B cell (primary cell): ENCODE measurements at regions of chr6 and their contacts with region 1.

Region 1: GRCh38 chr6:45942953-45943352 is 72.7 kb downstream of the CLIC5 start:
- DNase-seq: no peak
- ATAC-seq: no peak
- H3K4me3 ChIP-seq: no peak overlapping the region
- H3K4me3 Mint-ChIP-seq: no peak overlapping the region
- H3K27ac ChIP-seq: no peak overlapping the region
- H3K27ac Mint-ChIP-seq: no peak overlapping the region
- H3K4me1 ChIP-seq: no peaks in the 10 kb centered on the region
- H3K4me1 Mint-ChIP-seq: no peaks in the 10 kb centered on the region
- H3K27me3 ChIP-seq: no peaks in the 10 kb centered on the region
- H3K27me3 Mint-ChIP-seq: no peaks in the 10 kb centered on the region
- CTCF ChIP-seq: no peak

Region 2: DNA sequence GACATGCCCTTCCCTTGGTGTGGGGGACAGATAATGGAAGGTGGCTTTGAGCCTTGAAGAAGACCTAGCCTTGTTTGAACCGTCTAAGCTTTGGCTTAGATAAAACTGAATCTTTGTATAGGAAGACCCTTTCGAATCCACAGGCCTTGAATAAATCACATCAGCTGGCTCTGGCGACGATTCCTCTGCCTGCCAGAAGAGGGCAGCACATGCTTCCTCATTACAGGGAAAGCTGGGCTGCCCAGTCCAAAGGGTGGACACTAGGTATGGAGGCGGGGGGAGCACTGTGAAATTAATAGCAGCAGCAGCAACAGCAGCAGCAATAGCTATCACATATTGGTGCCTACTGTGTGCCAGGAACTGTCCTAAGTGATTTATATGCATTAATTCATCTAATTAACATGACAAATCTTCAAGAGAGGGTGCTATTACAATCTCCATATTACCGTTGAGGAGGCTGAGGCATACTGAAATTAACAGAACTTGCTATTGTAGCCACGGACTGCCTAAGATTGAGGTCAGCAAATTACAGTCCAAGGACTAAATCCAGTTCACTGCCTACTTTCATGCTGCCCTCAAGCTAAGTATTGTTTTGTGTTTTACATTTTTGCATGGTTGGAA is 12.4 kb before region 1 on chr6:
- CTCF ChIA-PET with region 1: interaction called, 12 read pairs
- POLR2A ChIA-PET with region 1: no interaction called
- intact Hi-C with region 1: no loop called
- DNase-seq: peak; percentile 63
- ATAC-seq: no peak
- H3K4me3 ChIP-seq: no peak overlapping the region
- H3K4me3 Mint-ChIP-seq: no peak overlapping the region
- H3K27ac ChIP-seq: no peak overlapping the region
- H3K27ac Mint-ChIP-seq: no peak overlapping the region
- H3K4me1 ChIP-seq: no peaks in the 10 kb centered on the region
- H3K4me1 Mint-ChIP-seq: no peaks in the 10 kb centered on the region
- H3K27me3 ChIP-seq: no peaks in the 10 kb centered on the region
- H3K27me3 Mint-ChIP-seq: peaks cover 4% of the 10 kb centered on the region
- CTCF ChIP-seq: peak; percentile 99

Region 3: DNA sequence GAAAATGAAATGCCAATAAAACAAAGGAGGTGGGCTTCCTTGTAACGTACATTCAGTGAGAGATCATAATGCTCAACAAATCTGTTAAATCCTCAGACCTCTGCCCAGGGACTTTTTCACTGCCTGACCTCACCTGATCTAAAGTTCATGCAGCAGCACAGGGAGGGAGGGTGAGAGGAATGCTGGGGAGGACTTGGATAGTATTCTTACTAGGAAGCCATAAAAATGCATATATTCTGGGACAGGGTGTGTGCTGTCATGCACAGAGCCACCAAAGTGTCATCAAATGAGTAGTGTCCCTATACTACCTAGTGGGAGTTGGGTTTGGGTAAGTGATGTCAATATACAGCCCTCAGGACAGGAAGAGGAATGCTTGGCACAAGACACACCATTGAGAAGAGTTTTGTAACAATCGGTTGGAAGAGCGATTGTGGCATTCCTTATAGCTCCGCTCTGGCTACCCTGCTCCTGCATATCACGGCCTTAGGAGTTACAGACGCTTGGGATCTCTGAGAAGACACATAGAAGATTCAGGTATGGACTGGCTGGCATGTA is 40.2 kb after region 1 on chr6:
- CTCF ChIA-PET with region 1: no interaction called
- POLR2A ChIA-PET with region 1: no interaction called
- intact Hi-C with region 1: no loop called
- DNase-seq: no peak
- ATAC-seq: no peak
- H3K4me3 ChIP-seq: no peak overlapping the region
- H3K4me3 Mint-ChIP-seq: no peak overlapping the region
- H3K27ac ChIP-seq: no peak overlapping the region
- H3K27ac Mint-ChIP-seq: no peak overlapping the region
- H3K4me1 ChIP-seq: no peaks in the 10 kb centered on the region
- H3K4me1 Mint-ChIP-seq: no peaks in the 10 kb centered on the region
- H3K27me3 ChIP-seq: no peaks in the 10 kb centered on the region
- H3K27me3 Mint-ChIP-seq: peaks cover under 1% of the 10 kb centered on the region
- CTCF ChIP-seq: no peak

Region 4: GRCh38 chr6:46473881-46474280 is 530.9 kb after region 1 on chr6:
- CTCF ChIA-PET with region 1: no interaction called
- POLR2A ChIA-PET with region 1: no interaction called
- intact Hi-C with region 1: no loop called
- DNase-seq: no peak
- ATAC-seq: no peak
- H3K4me3 ChIP-seq: no peak overlapping the region
- H3K4me3 Mint-ChIP-seq: no peak overlapping the region
- H3K27ac ChIP-seq: no peak overlapping the region
- H3K27ac Mint-ChIP-seq: no peak overlapping the region
- H3K4me1 ChIP-seq: no peaks in the 10 kb centered on the region
- H3K4me1 Mint-ChIP-seq: no peaks in the 10 kb centered on the region
- H3K27me3 ChIP-seq: peaks cover 0 to 3% (median 0%) of the 10 kb centered on the region in 4 experiments
- H3K27me3 Mint-ChIP-seq: peaks cover 29% of the 10 kb centered on the region
- CTCF ChIP-seq: no peak